Right cardiac atrium (tissue), 5 donors: ENCODE measurements at regions of chr2 and their contacts with region 1.

Region 1: GRCh38 chr2:20525041-20526035 is 78.5 kb downstream of the RHOB start:
- DNase-seq: peak in 2 of 3 donors; percentile 68 to 72
- ATAC-seq: peak; percentile 44 to 78
- H3K4me3 ChIP-seq: no peak overlapping the region
- H3K27ac ChIP-seq: peak overlapping the region; percentile 86
- H3K4me1 ChIP-seq: peaks cover 13% of the 10 kb centered on the region
- H3K27me3 ChIP-seq: no peaks in the 10 kb centered on the region

Region 2: DNA sequence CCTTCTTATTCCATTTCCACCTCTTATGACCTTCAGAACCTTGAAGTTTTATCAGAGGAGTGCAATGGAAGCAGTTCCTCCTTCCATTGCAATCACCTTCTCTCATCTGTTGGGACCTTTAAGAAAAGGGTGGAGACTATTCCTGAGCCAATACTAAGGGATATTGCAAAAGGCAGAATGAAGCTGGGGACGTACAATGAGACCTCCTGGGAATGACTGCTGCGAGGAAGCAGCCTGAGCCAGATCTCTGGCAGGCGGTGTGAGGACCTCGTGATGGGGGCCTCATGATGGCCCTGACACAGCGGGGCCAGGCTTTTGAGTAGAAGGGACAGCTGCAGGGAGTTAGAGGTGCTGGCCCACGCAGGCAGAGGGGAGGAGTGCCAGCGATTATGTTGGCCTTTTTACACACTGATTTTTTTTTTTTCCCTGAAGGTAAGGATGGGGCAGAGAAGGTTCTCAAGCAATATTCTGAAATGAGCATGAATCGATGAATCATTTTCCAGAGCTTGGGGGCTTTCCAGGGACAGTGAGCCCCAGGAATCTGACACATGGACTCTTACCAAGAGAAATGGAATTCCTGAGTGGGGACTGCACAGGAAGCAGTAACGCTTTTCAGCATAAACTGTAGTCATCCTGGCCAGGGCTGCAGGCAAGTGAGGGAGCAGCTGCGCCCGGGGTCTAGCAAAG is 433.9 kb before region 1 on chr2:
- intact Hi-C with region 1: no loop called
- DNase-seq: peak; percentile 78 to 88 (median 85)
- ATAC-seq: peak; percentile 79 to 86
- H3K4me3 ChIP-seq: no peak overlapping the region
- H3K27ac ChIP-seq: no peak overlapping the region
- H3K4me1 ChIP-seq: peaks cover 4% of the 10 kb centered on the region
- H3K27me3 ChIP-seq: no peaks in the 10 kb centered on the region

Region 3: DNA sequence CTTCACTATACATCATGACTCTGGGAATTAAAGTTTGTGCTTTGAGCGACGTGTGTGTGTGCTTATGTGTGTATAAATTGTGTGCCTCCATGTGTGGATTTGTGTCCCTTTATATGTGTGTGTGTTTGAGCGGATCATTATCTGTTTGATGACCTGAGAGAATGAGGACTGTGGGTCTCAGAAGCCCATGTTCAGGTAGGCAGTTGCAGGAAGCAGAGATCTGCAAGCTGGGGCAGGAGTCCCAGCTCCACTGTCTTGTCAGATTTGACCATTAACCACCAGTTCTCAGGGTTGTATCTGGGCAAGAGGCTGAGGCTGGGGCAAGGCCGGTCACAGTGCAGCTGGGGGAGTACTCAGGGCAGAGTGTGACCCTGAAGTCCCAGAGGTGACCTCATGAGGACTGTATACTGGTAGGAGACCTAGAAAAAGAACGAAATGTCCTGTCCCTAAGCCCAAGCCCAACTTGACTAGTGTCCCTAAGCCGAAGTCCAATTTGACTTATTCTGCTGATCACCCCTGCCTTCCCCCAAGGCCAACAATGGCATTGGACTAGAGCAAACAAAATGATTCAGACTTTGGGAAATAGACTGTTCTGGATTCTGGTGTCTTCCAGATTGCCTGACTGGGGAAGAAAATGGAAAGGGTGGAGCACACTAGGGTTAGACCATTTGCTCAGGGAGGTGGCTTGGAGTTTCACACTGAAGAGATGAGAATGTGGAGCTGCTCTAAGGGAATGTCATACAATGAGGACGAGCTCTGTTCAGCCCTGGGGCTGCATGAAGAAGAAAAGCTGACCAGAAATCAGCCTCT is 50.4 kb before region 1 on chr2:
- intact Hi-C with region 1: loop called in 1 of 4 experiments (anchors 10 kb)
- DNase-seq: no peak
- ATAC-seq: peak; percentile 39 to 54
- H3K4me3 ChIP-seq: no peak overlapping the region
- H3K27ac ChIP-seq: peak overlapping the region; percentile 68
- H3K4me1 ChIP-seq: peaks cover 8% of the 10 kb centered on the region
- H3K27me3 ChIP-seq: no peaks in the 10 kb centered on the region

Region 4: DNA sequence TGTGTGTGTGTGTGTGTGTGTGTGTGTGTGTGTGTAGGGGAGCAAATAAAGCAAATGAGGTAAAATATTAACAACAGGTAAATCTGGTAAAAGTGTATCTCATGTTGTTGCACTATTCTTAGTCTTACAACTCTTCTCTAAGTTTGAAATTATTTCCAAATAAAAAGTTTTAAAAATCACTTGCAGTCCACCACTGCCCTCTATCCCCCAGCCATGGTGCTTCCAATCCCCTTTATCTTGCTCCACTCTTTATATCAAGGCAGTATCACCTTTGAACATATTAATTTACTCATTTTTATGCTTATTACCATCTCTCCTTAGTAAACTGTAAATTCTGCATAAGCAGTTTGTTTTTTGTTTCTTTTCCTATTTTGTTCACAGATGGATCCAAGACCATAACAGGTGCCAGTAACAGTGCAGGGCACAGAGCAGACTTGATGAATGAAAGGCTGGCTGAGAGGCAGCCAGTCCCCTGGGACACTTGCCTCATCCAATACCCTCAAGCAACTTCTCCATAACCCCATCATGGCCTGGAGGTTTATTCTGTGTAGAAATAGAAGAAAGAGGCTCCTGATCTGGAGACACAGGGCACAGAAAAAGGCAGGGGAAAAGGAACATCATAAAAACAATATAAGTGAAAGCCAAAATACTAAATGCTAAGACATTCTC is 229.9 kb after region 1 on chr2:
- intact Hi-C with region 1: no loop called
- DNase-seq: no peak
- ATAC-seq: no peak
- H3K4me3 ChIP-seq: no peak overlapping the region
- H3K27ac ChIP-seq: no peak overlapping the region
- H3K4me1 ChIP-seq: no peaks in the 10 kb centered on the region
- H3K27me3 ChIP-seq: no peaks in the 10 kb centered on the region